ENCODE measurements at regions of chr17 and their contacts with region 1.

Region 1: DNA sequence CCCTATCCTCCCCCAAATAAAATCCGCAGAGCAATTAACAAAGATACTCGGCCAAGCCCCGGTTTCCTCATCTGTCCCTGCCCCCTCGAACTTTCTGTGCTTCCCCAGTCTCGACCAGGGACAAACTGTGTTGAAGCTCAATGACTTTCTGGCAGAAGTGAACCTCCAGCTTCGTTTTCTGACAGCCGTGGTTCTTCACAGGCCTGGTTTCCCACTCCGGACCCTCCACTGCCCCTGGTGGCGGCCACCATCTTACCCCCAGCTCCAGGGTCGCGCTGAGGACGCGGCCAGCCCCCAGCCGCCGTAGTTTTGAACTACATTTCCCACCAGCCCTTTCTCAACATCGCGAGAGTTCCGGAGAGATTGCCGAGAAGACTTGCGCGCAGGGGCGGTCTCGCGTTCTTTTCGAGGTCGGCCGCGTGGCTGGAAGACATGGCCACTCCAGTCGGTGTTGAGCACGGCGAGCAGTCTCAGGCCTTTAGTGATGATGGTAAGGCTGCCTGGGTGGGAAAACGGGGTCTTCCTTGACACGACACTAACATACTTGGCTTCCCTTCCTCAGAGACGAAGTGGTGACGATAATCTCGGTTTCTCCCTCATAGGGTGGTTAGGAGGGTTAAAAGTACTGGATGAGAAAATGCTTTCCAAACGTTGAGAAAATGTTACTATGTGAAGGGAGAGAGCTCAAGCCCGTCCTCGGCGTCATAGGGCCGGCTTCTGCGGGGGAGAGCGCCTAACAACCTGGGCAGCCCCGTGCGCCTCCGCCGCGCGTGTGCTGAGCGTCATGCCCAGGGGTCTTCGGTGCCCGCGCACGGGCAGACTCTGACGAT is 17.7 kb downstream of the PRCD start:
- DNase-seq: peak; percentile 94 to 95 (median 94)
- H3K4me3 ChIP-seq: peak overlapping the region; percentile 87 to 99
- H3K4me3 Mint-ChIP-seq: peak overlapping the region; percentile 94 to 99 (median 98)
- H3K27ac ChIP-seq: peak overlapping the region; percentile 94
- H3K27ac Mint-ChIP-seq: peak overlapping the region; percentile 99 to 100 (median 99)
- H3K4me1 ChIP-seq: peaks cover 60% of the 10 kb centered on the region
- H3K4me1 Mint-ChIP-seq: peaks cover 35 to 74% (median 50%) of the 10 kb centered on the region in 4 donors
- H3K27me3 ChIP-seq: no peaks in the 10 kb centered on the region
- H3K27me3 Mint-ChIP-seq: no peaks in the 10 kb centered on the region

Region 2: GRCh38 chr17:76384222-76384986 is 173.2 kb before region 1 on chr17 and contains the start of gene SPHK1:
- CTCF ChIA-PET with region 1: no interaction called
- POLR2A ChIA-PET with region 1: no interaction called
- intact Hi-C with region 1: no loop called
- DNase-seq: peak in 4 of 5 donors; percentile 38 to 60 (median 50)
- H3K4me3 ChIP-seq: peak within 1 kb of the TSS; percentile 42 to 64
- H3K4me3 Mint-ChIP-seq: peak within 1 kb of the TSS; percentile 86 to 95 (median 90)
- H3K27ac ChIP-seq: no peak within 1 kb of the TSS
- H3K27ac Mint-ChIP-seq: peak within 1 kb of the TSS; percentile 39 to 92 (median 72)
- H3K4me1 ChIP-seq: peaks cover 20% of the 10 kb centered on the region
- H3K4me1 Mint-ChIP-seq: peaks cover 0 to 6% (median 4%) of the 10 kb centered on the region in 4 donors
- H3K27me3 ChIP-seq: no peaks in the 10 kb centered on the region
- H3K27me3 Mint-ChIP-seq: no peaks in the 10 kb centered on the region
- total RNA-seq, gene SPHK1: 0.67 to 0.70 TPM

Region 3: DNA sequence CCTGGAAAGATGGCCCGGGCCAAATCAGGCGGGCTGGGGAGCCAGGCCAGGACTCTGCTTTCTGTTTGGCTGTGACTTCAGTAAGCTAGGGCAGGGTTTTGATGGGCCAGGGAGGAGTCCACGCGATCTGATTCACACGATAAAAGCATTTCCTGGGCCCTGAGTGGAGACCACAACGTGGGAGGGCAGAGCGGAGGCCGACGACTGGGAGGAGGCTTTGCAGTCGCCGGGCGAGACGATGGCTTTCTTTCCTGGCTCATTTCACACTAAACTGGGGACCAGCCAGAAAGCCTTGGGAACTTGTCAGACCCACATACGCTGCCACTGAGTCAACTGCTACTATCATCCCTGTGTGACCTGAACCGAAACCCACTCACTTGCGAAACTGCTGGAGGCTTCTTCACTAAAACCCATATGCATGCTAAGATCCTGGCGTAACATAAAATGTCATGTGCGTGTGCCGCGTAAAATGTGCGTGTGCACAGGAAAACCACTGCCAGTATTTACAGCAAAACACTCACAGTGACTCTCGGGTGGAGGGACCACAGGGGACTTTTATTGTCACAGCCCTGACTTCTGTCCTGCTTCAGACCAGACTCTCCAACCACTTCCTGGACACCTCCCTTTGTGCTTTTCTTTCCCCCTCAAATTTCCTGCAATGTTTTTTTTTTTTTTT is 42.2 kb before region 1 on chr17:
- CTCF ChIA-PET with region 1: interaction called, 5 read pairs
- POLR2A ChIA-PET with region 1: interaction called, 13 read pairs
- intact Hi-C with region 1: loop called (anchors 1 kb)
- DNase-seq: peak; percentile 91 to 95 (median 94)
- H3K4me3 ChIP-seq: peak overlapping the region; percentile 20 to 25
- H3K4me3 Mint-ChIP-seq: peak overlapping the region; percentile 69 to 86 (median 80)
- H3K27ac ChIP-seq: peak overlapping the region; percentile 76
- H3K27ac Mint-ChIP-seq: peak overlapping the region; percentile 94 to 100 (median 99)
- H3K4me1 ChIP-seq: peaks cover 82% of the 10 kb centered on the region
- H3K4me1 Mint-ChIP-seq: peaks cover 31 to 85% (median 51%) of the 10 kb centered on the region in 4 donors
- H3K27me3 ChIP-seq: no peaks in the 10 kb centered on the region
- H3K27me3 Mint-ChIP-seq: no peaks in the 10 kb centered on the region

Region 4: DNA sequence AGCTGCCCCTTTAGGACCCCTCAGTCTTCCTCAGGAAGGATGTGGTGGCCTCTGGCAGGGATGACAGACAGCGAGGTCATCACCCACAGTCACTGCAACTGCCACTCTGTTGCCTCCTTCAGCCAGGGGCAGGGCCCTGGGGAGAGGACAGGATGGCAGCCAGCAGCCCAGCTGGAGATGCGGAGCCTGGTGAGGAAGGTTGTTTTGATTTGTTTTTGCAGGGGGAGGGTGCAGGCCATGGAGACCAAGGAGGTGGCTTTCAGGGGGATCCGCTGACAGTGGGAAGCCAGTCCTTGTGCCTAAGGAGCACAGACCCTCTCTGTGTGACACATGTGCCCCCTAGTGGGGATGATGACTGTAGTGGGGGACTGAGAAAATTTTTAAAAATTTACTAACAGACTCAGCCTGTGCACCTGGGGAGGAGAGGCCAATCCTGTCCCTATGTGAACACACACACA is 10.4 kb before region 1 on chr17:
- CTCF ChIA-PET with region 1: interaction called, 34 read pairs
- POLR2A ChIA-PET with region 1: interaction called, 18 read pairs
- intact Hi-C with region 1: no loop called
- DNase-seq: peak; percentile 37 to 62 (median 59)
- H3K4me3 ChIP-seq: no peak overlapping the region
- H3K4me3 Mint-ChIP-seq: no peak overlapping the region
- H3K27ac ChIP-seq: no peak overlapping the region
- H3K27ac Mint-ChIP-seq: peak overlapping the region in 1 of 7 donors; percentile 38
- H3K4me1 ChIP-seq: peaks cover 7% of the 10 kb centered on the region
- H3K4me1 Mint-ChIP-seq: peaks cover 0 to 2% (median 0%) of the 10 kb centered on the region in 4 donors
- H3K27me3 ChIP-seq: no peaks in the 10 kb centered on the region
- H3K27me3 Mint-ChIP-seq: peaks cover 6% of the 10 kb centered on the region in 2 donors

Region 5: GRCh38 chr17:76585818-76586593 is 28.4 kb after region 1 on chr17 and contains the start of gene ST6GALNAC2:
- CTCF ChIA-PET with region 1: interaction called, 67 read pairs
- POLR2A ChIA-PET with region 1: interaction called, 76 read pairs
- intact Hi-C with region 1: loop called (anchors 2 kb)
- DNase-seq: peak in 4 of 5 donors; percentile 34 to 58 (median 50)
- H3K4me3 ChIP-seq: peak within 1 kb of the TSS in 1 of 2 donors; percentile 52
- H3K4me3 Mint-ChIP-seq: peak within 1 kb of the TSS; percentile 74 to 83 (median 79)
- H3K27ac ChIP-seq: no peak within 1 kb of the TSS
- H3K27ac Mint-ChIP-seq: peak within 1 kb of the TSS in 2 of 7 donors; percentile 8 to 18
- H3K4me1 ChIP-seq: peaks cover 16% of the 10 kb centered on the region
- H3K4me1 Mint-ChIP-seq: peaks cover 5 to 25% (median 11%) of the 10 kb centered on the region in 4 donors
- H3K27me3 ChIP-seq: peaks cover 12% of the 10 kb centered on the region
- H3K27me3 Mint-ChIP-seq: peaks cover 25 to 29% of the 10 kb centered on the region in 2 donors
- total RNA-seq, gene ST6GALNAC2: 3.3 to 3.6 TPM

Region 6: GRCh38 chr17:76671123-76671911 is 113.7 kb after region 1 on chr17:
- CTCF ChIA-PET with region 1: interaction called, 17 read pairs
- POLR2A ChIA-PET with region 1: interaction called, 24 read pairs
- intact Hi-C with region 1: no loop called
- DNase-seq: peak; percentile 98 to 99 (median 99)
- H3K4me3 ChIP-seq: peak overlapping the region; percentile 75 to 83
- H3K4me3 Mint-ChIP-seq: peak overlapping the region; percentile 87 to 97 (median 92)
- H3K27ac ChIP-seq: peak overlapping the region; percentile 72
- H3K27ac Mint-ChIP-seq: peak overlapping the region; percentile 91 to 98 (median 97)
- H3K4me1 ChIP-seq: peaks cover 34% of the 10 kb centered on the region
- H3K4me1 Mint-ChIP-seq: peaks cover 22 to 32% (median 29%) of the 10 kb centered on the region in 4 donors
- H3K27me3 ChIP-seq: no peaks in the 10 kb centered on the region
- H3K27me3 Mint-ChIP-seq: no peaks in the 10 kb centered on the region

Region 7: DNA sequence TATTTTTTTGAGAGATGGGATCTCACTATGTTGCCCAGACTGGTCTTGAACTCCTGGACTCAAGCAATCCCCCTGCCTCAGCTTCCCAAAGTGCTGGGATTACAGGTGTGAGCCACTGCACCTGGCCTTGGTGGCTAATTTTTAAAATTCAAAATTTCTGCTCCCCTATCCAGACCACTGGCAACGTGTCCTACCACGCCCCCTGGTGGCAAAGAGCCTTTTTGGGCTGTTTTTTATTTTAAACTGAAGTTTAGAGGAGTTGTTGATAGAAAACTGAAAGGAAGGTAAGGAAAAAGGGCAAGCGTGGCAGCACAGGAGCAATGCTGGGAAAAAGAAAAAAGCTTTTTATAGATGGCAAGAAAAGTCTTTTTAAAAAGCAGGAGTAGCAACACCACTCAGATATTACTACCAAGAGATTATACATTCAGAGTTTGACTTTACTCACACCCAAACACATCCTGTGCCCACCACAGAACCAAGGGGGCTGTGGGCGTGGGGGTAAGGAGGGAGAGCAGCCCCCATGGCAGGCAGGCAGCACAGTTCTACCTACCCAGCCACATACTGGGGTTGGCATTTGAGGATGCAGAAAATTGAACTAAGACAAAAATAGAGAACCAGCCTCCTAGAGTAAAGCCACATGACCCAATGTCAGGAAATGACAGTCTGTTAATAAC is 157.4 kb after region 1 on chr17:
- CTCF ChIA-PET with region 1: interaction called, 13 read pairs
- POLR2A ChIA-PET with region 1: interaction called, 14 read pairs
- intact Hi-C with region 1: loop called (anchors 1 kb)
- DNase-seq: peak; percentile 63 to 75 (median 71)
- H3K4me3 ChIP-seq: no peak overlapping the region
- H3K4me3 Mint-ChIP-seq: peak overlapping the region in 5 of 8 donors; percentile 1 to 33 (median 14)
- H3K27ac ChIP-seq: peak overlapping the region; percentile 53
- H3K27ac Mint-ChIP-seq: peak overlapping the region; percentile 72 to 94 (median 87)
- H3K4me1 ChIP-seq: peaks cover 39% of the 10 kb centered on the region
- H3K4me1 Mint-ChIP-seq: peaks cover 24 to 46% (median 35%) of the 10 kb centered on the region in 4 donors
- H3K27me3 ChIP-seq: no peaks in the 10 kb centered on the region
- H3K27me3 Mint-ChIP-seq: no peaks in the 10 kb centered on the region

Region 8: GRCh38 chr17:76737082-76737675 is 179.6 kb after region 1 on chr17 and contains the start of gene SRSF2:
- CTCF ChIA-PET with region 1: no interaction called
- POLR2A ChIA-PET with region 1: interaction called, 17 read pairs
- intact Hi-C with region 1: no loop called
- DNase-seq: peak; percentile 99 to 100 (median 100)
- H3K4me3 ChIP-seq: peak within 1 kb of the TSS; percentile 76 to 93
- H3K4me3 Mint-ChIP-seq: peak within 1 kb of the TSS; percentile 92 to 98 (median 96)
- H3K27ac ChIP-seq: peak within 1 kb of the TSS; percentile 95
- H3K27ac Mint-ChIP-seq: peak within 1 kb of the TSS; percentile 98 to 100 (median 99)
- H3K4me1 ChIP-seq: peaks cover 58% of the 10 kb centered on the region
- H3K4me1 Mint-ChIP-seq: peaks cover 38 to 66% (median 49%) of the 10 kb centered on the region in 4 donors
- H3K27me3 ChIP-seq: no peaks in the 10 kb centered on the region
- H3K27me3 Mint-ChIP-seq: no peaks in the 10 kb centered on the region
- total RNA-seq, gene SRSF2: 327 to 330 TPM